CD4-positive, alpha-beta T cell (primary cell): ENCODE measurements at regions of chr3 and their contacts with region 1.

Region 1: DNA sequence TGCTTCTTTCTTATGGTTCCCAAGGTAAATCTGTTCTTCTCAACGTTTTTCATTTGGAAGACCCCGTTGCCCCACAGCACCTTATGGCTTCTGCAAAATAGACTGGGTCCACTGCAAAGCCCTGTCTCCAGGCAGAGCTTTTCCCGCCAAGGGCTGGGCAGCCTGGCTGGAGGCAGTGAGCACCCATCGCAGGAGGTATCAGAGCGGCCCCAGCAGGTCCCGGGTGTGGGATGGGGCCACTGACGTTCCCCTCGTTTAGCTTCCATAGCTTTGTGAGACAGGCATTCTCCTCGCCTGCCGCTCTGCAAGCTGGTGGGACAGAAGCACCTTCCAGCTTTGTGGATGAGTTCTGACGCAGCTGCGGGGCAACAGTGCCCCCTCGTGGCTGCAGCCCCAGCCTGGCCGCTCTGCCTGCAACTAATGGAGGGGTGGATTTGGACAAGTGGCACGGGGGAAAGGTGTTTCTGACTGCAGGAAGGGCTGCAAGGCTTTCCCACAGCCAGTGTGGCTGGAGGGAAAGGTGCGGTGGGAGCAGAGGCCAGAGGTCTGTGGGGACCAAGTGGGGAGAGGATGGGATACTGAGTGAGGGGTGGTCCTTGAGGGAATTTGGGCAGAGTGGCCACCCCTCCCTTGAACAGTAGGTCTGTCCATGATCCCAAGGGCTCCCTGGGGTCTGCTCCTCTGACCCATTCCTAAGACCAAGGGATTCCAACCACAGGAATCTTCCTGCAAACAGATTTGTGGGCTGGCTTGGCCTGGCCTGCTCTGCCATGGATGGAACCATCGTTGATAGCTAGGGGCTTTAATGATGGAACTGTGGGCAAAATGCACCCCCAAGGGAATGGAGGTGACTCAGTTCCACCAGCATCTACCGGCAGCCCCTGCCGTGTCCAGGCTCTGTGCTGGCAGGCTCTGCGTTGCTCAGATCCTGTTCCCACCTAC is 99.4 kb downstream of the FBLN2 start:
- DNase-seq: peak; percentile 54 to 88 (median 73)
- ATAC-seq: peak; percentile 38
- H3K4me3 ChIP-seq: no peak overlapping the region
- H3K4me3 Mint-ChIP-seq: no peak overlapping the region
- H3K27ac ChIP-seq: no peak overlapping the region
- H3K27ac Mint-ChIP-seq: no peak overlapping the region
- H3K4me1 ChIP-seq: peaks cover 46% of the 10 kb centered on the region
- H3K4me1 Mint-ChIP-seq: peaks cover 51% of the 10 kb centered on the region
- H3K27me3 ChIP-seq: peaks cover 10 to 12% of the 10 kb centered on the region in 2 experiments
- H3K27me3 Mint-ChIP-seq: peaks cover 34% of the 10 kb centered on the region
- CTCF ChIP-seq: peak; percentile 95

Region 2: DNA sequence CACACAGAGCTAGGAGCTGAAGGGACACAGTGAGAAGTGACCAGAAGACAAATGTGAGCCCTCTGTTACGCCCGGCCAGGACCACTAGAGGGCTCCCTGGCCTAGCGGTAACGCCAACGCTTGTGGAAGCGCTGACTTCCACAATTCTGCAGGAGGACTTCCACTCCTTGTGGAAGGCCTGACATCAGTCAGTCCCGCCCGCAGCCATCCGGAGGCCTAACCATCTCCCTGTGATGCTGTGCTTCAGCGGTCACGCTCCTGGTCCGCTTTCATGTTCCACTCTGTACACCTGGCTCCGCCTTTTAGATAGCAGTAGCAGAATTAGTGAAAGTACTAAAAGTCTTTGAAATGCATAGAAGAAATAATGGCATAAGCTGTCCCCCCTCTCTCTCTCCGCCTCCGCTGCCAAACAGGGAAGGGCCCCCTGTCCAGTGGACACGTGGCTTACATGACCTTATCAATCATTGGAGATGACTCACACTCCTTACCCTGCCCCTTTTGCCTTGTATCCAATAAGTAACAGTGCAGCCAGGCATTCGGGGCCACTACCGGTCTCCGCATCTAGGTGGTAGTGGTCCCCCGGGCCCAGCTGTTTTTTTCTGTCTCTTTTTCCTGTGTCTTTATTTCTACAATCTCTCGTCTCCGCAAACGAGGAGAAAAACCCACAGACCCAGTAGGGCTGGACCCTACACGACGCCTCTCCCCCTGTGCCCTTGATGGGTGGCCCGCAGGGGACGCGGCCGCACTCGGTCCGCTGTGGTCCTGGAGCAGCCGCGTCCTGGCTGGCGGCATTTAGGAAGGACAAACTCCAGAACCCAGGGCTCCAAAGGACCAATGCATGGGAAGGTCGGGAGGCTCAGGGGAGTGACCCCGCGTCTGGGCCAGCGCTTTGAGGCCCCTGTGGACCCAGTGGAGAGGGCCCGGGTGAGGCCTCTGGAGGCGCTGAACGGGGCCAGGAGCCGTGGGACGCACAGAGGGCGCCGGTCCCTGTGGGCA is 780.0 kb before region 1 on chr3:
- CTCF ChIA-PET with region 1: no interaction called
- POLR2A ChIA-PET with region 1: no interaction called
- intact Hi-C with region 1: loop called in 1 of 2 experiments (anchors 5 kb)
- DNase-seq: peak in 13 of 14 experiments; percentile 12 to 78 (median 46)
- ATAC-seq: peak; percentile 82
- H3K4me3 ChIP-seq: peak overlapping the region; percentile 54
- H3K4me3 Mint-ChIP-seq: peak overlapping the region; percentile 90
- H3K27ac ChIP-seq: no peak overlapping the region
- H3K27ac Mint-ChIP-seq: no peak overlapping the region
- H3K4me1 ChIP-seq: peaks cover 26% of the 10 kb centered on the region
- H3K4me1 Mint-ChIP-seq: peaks cover 14% of the 10 kb centered on the region
- H3K27me3 ChIP-seq: peaks cover 9 to 15% of the 10 kb centered on the region in 2 experiments
- H3K27me3 Mint-ChIP-seq: peaks cover 40% of the 10 kb centered on the region
- CTCF ChIP-seq: peak; percentile 87

Region 3: DNA sequence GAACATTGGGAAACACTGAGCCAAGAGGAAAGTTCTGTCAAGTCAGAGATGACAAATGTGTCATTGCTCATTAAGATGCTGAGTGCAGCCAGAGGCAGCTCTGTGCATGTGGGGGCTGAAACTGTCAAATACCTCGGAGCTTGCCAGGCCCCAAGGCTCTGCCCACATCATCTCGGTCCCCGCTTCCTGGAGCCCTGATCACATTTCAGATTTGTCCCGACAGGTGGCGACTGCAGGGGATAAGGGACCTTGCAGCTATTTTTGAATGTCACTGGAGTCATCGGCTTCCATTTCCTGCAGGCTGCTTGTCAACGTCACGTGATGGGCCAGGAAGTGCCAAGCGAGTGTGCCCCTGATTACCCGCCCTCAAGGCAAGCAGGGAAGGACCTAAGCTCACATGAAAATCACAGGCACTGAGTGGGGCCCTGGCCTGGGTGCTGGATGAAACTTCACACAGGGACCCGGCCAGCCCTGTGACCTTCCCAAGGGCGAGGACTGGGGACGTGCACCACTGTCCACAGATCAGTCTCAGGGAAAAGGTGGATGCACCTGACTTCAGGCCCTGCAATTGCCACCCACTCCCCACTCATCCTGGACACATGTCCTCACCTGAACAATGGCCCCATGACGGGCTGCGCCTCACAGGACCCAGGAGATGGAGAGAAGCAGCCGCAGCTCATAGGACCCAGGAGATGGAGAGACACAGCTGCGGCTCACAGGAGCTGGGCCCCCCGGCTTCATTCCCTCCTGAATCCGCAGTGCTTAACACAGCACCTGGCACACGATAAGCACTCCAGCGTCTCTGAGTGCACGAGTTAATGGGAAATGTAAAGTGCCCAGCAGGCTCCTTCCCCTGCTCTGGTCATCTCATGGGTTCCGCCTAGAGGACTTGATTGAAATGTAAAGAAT is 301.6 kb before region 1 on chr3:
- CTCF ChIA-PET with region 1: no interaction called
- POLR2A ChIA-PET with region 1: interaction called, 3 read pairs
- intact Hi-C with region 1: loop called in 1 of 2 experiments (anchors 10 kb)
- DNase-seq: peak; percentile 60 to 91 (median 73)
- ATAC-seq: peak; percentile 85
- H3K4me3 ChIP-seq: no peak overlapping the region
- H3K4me3 Mint-ChIP-seq: peak overlapping the region; percentile 68
- H3K27ac ChIP-seq: peak overlapping the region; percentile 39 to 54
- H3K27ac Mint-ChIP-seq: peak overlapping the region; percentile 85
- H3K4me1 ChIP-seq: peaks cover 44% of the 10 kb centered on the region
- H3K4me1 Mint-ChIP-seq: peaks cover 54% of the 10 kb centered on the region
- H3K27me3 ChIP-seq: no peaks in the 10 kb centered on the region
- H3K27me3 Mint-ChIP-seq: no peaks in the 10 kb centered on the region
- CTCF ChIP-seq: peak; percentile 51

Region 4: GRCh38 chr3:13548696-13549622 is 99.4 kb before region 1 on chr3 and contains the start of gene FBLN2:
- CTCF ChIA-PET with region 1: no interaction called
- POLR2A ChIA-PET with region 1: no interaction called
- intact Hi-C with region 1: no loop called
- DNase-seq: peak in 5 of 14 experiments; percentile 22 to 53 (median 41)
- ATAC-seq: peak; percentile 28
- H3K4me3 ChIP-seq: no peak within 1 kb of the TSS
- H3K4me3 Mint-ChIP-seq: peak within 1 kb of the TSS; percentile 77
- H3K27ac ChIP-seq: no peak within 1 kb of the TSS
- H3K27ac Mint-ChIP-seq: no peak within 1 kb of the TSS
- H3K4me1 ChIP-seq: peaks cover 21% of the 10 kb centered on the region
- H3K4me1 Mint-ChIP-seq: peaks cover 27% of the 10 kb centered on the region
- H3K27me3 ChIP-seq: peaks cover 30% of the 10 kb centered on the region in 2 experiments
- H3K27me3 Mint-ChIP-seq: peaks cover 63% of the 10 kb centered on the region
- CTCF ChIP-seq: no peak
- total RNA-seq, gene FBLN2: 0.19 to 0.25 TPM

Region 5: DNA sequence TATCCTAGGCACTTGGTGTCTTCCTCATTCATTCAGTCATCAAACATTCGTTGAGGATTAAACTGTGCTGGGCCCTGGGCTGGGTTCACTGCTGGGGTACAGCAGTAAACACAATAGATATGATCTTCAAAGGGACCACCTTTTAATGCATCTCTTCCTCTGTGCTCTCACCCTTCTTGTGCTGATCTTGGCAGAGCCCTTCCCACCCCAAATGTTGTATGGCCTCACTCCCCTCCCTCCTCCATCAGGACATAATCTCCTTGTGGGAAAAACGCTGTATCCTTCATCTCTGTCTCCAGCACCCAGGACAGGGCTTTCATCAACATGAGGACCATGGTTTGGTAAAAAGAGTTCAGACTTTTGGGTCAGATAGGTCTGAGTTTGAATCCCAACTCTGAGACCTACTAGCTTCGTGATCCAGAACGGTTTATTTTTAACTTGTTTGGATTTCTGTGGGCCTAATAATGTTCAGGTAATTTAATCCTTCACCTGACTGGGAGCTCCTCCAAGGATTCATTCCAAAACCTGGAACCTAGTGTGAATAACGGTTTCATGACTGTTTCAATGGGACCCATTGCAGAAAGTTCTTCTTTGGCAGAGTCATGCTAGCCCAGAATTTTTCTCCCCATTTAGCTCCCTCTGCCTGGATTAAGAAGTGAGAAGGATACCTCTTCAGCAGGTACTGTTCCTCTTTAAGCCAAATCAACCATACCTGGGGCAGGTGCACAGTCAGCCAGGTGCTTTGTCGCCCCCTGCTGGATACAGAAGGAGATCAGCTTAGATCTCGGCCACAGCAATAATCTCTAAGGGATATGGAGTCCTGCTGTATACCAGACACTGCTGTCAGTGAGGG is 236.7 kb after region 1 on chr3:
- CTCF ChIA-PET with region 1: interaction called, 166 read pairs
- POLR2A ChIA-PET with region 1: interaction called, 35 read pairs
- intact Hi-C with region 1: no loop called
- DNase-seq: peak; percentile 61 to 88 (median 72)
- ATAC-seq: peak; percentile 79
- H3K4me3 ChIP-seq: no peak overlapping the region
- H3K4me3 Mint-ChIP-seq: peak overlapping the region; percentile 78
- H3K27ac ChIP-seq: no peak overlapping the region
- H3K27ac Mint-ChIP-seq: peak overlapping the region; percentile 3
- H3K4me1 ChIP-seq: peaks cover 27% of the 10 kb centered on the region
- H3K4me1 Mint-ChIP-seq: peaks cover 22% of the 10 kb centered on the region
- H3K27me3 ChIP-seq: peaks cover 4 to 13% of the 10 kb centered on the region in 2 experiments
- H3K27me3 Mint-ChIP-seq: peaks cover 15% of the 10 kb centered on the region
- CTCF ChIP-seq: peak; percentile 95

Region 6: DNA sequence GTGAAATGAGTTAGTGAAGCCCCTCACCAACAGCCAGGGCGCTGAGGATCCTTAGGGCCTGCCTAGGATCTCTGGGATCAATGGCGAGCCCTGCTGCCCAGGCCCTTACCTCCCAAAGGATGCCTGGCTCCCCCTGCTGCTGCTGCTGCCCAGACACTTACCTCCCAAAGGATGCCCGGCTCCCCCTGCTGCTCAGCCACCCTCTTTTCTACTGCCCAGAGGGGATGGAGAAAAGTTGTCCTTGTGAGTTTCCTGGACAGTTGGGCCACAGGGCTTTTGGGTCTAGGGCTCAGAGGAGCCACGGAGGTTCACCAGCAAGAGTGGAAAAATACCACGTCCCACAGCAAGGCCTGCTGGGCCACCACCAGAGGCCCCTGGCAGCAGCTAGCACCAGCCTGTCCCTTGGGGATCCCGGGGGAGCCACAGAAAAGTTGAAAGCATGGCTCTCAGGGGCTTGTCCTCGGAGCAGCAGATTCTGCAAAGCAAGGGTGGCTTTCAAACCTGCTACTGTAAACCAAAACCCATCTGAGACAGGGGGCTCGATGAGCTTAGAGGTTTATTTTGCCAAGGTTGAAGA is 813.5 kb after region 1 on chr3:
- CTCF ChIA-PET with region 1: no interaction called
- POLR2A ChIA-PET with region 1: no interaction called
- intact Hi-C with region 1: loop called in 1 of 2 experiments (anchors 10 kb)
- DNase-seq: peak; percentile 14 to 72 (median 45)
- ATAC-seq: peak; percentile 49
- H3K4me3 ChIP-seq: no peak overlapping the region
- H3K4me3 Mint-ChIP-seq: no peak overlapping the region
- H3K27ac ChIP-seq: no peak overlapping the region
- H3K27ac Mint-ChIP-seq: no peak overlapping the region
- H3K4me1 ChIP-seq: no peaks in the 10 kb centered on the region
- H3K4me1 Mint-ChIP-seq: no peaks in the 10 kb centered on the region
- H3K27me3 ChIP-seq: no peaks in the 10 kb centered on the region
- H3K27me3 Mint-ChIP-seq: no peaks in the 10 kb centered on the region
- CTCF ChIP-seq: peak; percentile 41